Pancreas (tissue), 10 donors: ENCODE measurements at regions of chr17 and their contacts with region 1.

Region 1: DNA sequence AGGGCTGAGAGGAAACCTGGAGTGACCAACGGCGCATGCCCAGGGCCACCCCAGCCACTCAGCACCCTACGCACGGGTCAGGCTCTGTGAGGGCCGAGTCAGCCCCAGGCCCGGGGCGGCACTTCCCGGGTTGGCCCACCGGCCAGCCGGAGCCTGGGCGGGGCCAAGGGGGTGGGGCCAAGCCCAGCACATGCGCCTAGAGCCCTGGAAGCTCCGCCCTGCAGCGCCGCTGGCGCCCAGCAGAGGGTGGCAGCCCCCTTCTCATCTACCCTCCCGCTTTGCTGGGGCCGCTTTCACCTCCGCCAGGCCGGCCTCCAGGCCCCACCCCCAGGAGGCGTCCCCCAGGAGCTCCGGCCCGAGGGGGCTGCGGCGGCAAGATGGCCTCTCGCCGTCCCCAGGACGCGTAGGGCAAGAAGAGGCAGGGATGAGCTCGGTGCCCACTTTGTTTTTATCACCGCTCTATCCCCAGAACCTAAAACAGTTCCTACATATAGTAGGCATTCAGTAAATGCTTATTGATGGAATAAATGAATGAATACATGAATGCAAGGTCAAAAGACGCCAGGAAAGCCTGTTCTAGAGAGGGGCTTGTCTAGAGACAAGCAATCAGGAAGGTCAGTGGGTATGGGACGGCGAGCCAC is 31.3 kb downstream of the MYO18A start:
- DNase-seq: peak; percentile 89 to 97 (median 95)
- ATAC-seq: peak; percentile 95 to 98 (median 96)
- H3K4me3 ChIP-seq: peak overlapping the region in 3 of 4 donors; percentile 33 to 49 (median 36)
- H3K27ac ChIP-seq: peak overlapping the region; percentile 42 to 77 (median 64)
- H3K4me1 ChIP-seq: peaks cover 8 to 33% (median 8%) of the 10 kb centered on the region in 3 donors
- H3K27me3 ChIP-seq: no peaks in the 10 kb centered on the region
- CTCF ChIP-seq: peak; percentile 87 to 96 (median 96)

Region 2: GRCh38 chr17:29180034-29180787 is 31.3 kb after region 1 on chr17 and contains the start of gene MYO18A:
- intact Hi-C with region 1: loop called in 1 of 3 experiments (anchors 5 kb)
- DNase-seq: peak; percentile 74 to 94 (median 88)
- ATAC-seq: peak; percentile 60 to 75 (median 72)
- H3K4me3 ChIP-seq: peak within 1 kb of the TSS; percentile 30 to 67 (median 51)
- H3K27ac ChIP-seq: peak within 1 kb of the TSS; percentile 87 to 94 (median 90)
- H3K4me1 ChIP-seq: peaks cover 17 to 31% (median 30%) of the 10 kb centered on the region in 3 donors
- H3K27me3 ChIP-seq: no peaks in the 10 kb centered on the region
- CTCF ChIP-seq: peak; percentile 83 to 93 (median 86)
- total RNA-seq, gene MYO18A: 21.3 to 47.0 (median 28.9) TPM

Region 3: DNA sequence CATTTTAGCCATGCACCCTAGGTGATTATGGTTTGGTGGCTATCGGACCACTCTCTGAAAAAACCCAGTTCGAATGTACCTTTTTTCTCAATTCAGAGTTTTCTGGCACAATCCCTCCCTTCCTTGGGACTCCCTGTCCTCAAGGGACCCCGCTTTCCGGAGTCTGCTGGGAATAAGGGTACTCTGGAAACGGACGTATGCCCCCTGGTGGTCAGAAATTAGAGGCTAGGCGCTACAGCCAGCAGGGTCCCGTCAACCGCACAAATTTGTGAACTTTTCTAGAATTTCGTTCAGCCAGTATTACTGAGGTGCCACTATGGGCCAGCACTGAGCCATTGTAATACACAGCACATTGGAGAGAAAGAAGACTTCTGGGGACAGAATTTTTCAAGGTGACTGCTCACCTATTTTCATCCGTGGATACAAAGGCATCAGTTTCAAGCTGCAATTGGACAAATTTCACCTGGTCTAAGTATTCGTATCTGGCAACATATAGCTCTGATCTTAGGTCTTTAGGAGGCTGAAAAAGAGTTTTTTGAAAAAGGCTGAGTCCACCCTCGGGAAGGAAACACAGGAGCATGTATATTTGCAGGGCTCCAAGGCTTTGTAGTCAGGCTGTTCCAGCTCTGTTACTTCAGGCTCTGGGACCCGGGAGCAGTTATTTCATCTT is 70.6 kb after region 1 on chr17:
- intact Hi-C with region 1: loop called in 2 of 3 experiments (anchors 5 to 10 kb)
- DNase-seq: peak in 5 of 6 donors; percentile 68 to 81 (median 75)
- ATAC-seq: peak; percentile 92 to 99 (median 96)
- H3K4me3 ChIP-seq: no peak overlapping the region
- H3K27ac ChIP-seq: no peak overlapping the region
- H3K4me1 ChIP-seq: no peaks in the 10 kb centered on the region
- H3K27me3 ChIP-seq: no peaks in the 10 kb centered on the region
- CTCF ChIP-seq: peak; percentile 92 to 97 (median 92)

Region 4: GRCh38 chr17:29283271-29283895 is 134.5 kb after region 1 on chr17:
- intact Hi-C with region 1: loop called in 1 of 3 experiments (anchors 10 kb)
- DNase-seq: no peak
- ATAC-seq: peak in 1 of 4 donors; percentile 21
- H3K4me3 ChIP-seq: no peak overlapping the region
- H3K27ac ChIP-seq: no peak overlapping the region
- H3K4me1 ChIP-seq: peaks cover 5 to 21% (median 13%) of the 10 kb centered on the region in 3 donors
- H3K27me3 ChIP-seq: no peaks in the 10 kb centered on the region
- CTCF ChIP-seq: no peak